GM10248 (cell line): ENCODE measurements at regions of chr18 and their contacts with region 1.

Region 1: GRCh38 chr18:39489431-39489830 is 1923.8 kb upstream of the CELF4 start:
- DNase-seq: no peak
- CTCF ChIP-seq: no peak

Region 2: DNA sequence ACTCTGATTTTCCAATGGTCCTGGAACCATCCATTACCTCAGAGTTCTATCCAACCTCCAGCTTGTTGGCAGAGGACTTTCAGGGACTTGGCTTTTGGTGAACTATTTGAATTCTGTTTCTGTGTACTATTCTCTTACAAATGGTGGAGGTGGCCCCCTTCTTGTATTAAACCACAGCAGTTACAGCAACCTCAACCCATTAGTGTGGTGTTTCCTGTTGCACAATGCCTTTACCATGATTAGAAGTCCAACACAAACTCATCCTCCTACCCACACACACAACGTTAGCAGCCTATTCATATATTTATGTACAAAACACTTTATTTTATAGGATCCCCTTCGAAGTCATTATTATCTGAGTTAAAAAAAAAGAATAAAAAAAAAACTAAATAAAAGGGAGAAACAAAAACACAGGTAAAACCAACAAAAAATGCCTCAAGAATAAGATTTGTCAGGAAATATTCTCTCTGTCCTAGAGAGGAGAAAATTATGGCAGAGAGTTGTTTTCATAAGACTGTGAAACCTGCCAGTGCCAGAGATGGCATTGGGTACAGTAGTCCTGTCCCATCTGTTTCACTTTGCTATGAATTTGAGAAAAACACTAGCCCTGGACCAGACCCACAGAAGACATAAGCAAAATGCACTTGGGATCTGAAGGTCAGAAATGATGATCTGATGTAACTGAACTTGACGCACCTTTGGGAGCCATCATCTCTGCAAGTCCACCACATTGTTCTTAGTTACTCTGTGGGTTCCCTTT is 569.6 kb after region 1 on chr18:
- CTCF ChIA-PET with region 1: no interaction called
- POLR2A ChIA-PET with region 1: interaction called, 12 read pairs
- DNase-seq: no peak
- CTCF ChIP-seq: no peak